MCF 10A (cell line): ENCODE measurements at regions of chr20 and their contacts with region 1.

Region 1: DNA sequence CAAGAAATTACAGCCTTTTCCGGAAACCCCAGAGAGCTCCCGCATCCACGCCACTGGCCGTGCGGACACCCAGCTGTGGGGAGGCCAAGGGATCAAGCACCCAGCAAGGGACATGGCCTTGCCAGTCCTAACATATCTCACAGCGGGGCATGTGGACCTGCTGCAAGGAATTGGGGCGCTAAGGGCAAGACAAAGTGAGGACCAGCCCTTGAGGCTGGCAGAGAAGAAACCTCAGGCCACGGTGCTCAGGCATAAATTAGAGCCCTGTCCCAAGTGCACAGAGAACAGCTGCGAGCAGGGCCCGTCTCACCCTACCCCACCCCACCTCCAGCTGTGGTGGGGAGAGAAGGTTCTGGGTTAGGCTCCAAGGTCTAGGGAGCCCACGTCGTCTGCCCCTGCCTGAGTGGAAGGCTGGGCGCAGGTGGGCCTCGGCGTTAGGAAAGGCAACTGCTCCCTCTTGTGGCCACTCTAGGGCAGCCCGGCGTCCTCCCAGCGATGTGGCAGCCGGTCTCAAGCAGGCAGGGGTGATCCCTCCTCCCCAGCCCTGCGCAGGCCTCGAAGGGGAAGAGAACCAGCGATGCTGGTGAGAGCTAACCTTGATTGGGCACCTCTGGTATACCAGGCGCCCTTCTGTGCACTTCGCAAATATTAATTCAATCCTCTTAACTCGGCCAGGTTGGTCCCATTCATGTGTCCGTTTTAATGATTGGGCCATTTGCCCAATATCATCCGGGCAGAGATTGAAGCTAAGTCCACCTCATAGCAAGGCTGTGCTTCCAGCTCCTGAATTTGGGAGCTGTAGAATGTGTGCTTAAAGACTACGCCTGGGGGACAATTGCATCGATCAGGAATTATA is 235.8 kb downstream of the NFATC2 start:
- DNase-seq: peak; percentile 73
- H3K4me3 Mint-ChIP-seq: no peak overlapping the region
- H3K27ac Mint-ChIP-seq: no peak overlapping the region
- H3K4me1 Mint-ChIP-seq: no peaks in the 10 kb centered on the region
- H3K27me3 Mint-ChIP-seq: no peaks in the 10 kb centered on the region
- CTCF ChIP-seq: peak; percentile 90

Region 2: GRCh38 chr20:50967586-50967985 is 339.1 kb before region 1 on chr20:
- CTCF ChIA-PET with region 1: interaction called, 19 read pairs
- POLR2A ChIA-PET with region 1: no interaction called
- intact Hi-C with region 1: no loop called
- DNase-seq: no peak
- H3K4me3 Mint-ChIP-seq: no peak overlapping the region
- H3K27ac Mint-ChIP-seq: no peak overlapping the region
- H3K4me1 Mint-ChIP-seq: no peaks in the 10 kb centered on the region
- H3K27me3 Mint-ChIP-seq: peaks cover 11% of the 10 kb centered on the region
- CTCF ChIP-seq: no peak

Region 3: DNA sequence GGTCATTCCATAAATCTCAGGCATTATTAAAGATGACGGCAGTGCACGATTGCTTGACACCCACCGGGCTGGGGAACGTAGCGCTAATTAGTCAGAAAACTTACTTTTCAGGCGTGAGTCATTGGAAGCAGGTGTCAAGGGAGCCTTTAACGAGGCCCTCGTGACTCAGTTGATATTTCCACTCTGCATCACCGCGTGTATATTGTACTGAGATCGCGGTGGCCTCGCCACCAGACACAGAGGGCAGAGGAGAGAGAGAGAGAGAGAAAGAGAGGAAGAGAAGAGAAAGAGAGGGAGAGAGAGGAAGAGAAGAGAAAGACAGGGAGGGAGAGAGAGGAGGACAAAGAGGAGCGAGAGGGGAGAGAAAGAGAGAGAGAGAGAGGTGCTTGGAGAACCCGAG is 305.0 kb before region 1 on chr20:
- CTCF ChIA-PET with region 1: interaction called, 810 read pairs
- POLR2A ChIA-PET with region 1: interaction called, 3 read pairs
- intact Hi-C with region 1: no loop called
- DNase-seq: no peak
- H3K4me3 Mint-ChIP-seq: no peak overlapping the region
- H3K27ac Mint-ChIP-seq: no peak overlapping the region
- H3K4me1 Mint-ChIP-seq: peaks cover 6% of the 10 kb centered on the region
- H3K27me3 Mint-ChIP-seq: no peaks in the 10 kb centered on the region
- CTCF ChIP-seq: no peak

Region 4: GRCh38 chr20:51029963-51030920 is 276.5 kb before region 1 on chr20:
- CTCF ChIA-PET with region 1: interaction called, 35 read pairs
- POLR2A ChIA-PET with region 1: no interaction called
- intact Hi-C with region 1: no loop called
- DNase-seq: no peak
- H3K4me3 Mint-ChIP-seq: no peak overlapping the region
- H3K27ac Mint-ChIP-seq: no peak overlapping the region
- H3K4me1 Mint-ChIP-seq: peaks cover 11% of the 10 kb centered on the region
- H3K27me3 Mint-ChIP-seq: peaks cover 26% of the 10 kb centered on the region
- CTCF ChIP-seq: no peak

Region 5: DNA sequence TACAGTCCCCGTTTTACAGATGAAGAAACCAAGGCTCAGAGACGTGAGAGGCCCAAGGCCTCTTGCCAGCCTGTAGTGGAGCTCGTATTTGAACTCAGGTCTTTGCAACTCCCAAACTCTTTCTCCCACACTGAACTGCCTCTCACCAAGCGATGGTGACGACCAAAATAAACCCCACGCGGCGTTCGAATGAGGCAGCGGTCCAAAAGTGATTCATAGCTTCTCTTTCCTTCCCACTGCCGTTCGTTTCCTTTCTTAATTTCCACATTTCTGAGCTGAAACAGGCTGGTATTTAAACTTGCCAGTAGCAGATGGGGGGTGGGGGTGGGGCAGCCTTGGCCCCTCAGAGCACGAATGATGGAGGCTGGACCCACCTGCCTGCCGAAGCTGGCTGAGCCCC is 30.9 kb before region 1 on chr20:
- CTCF ChIA-PET with region 1: interaction called, 13 read pairs
- POLR2A ChIA-PET with region 1: no interaction called
- intact Hi-C with region 1: no loop called
- DNase-seq: peak; percentile 5
- H3K4me3 Mint-ChIP-seq: no peak overlapping the region
- H3K27ac Mint-ChIP-seq: no peak overlapping the region
- H3K4me1 Mint-ChIP-seq: no peaks in the 10 kb centered on the region
- H3K27me3 Mint-ChIP-seq: peaks cover 11% of the 10 kb centered on the region
- CTCF ChIP-seq: no peak

Region 6: GRCh38 chr20:51331481-51331880 is 24.8 kb after region 1 on chr20:
- CTCF ChIA-PET with region 1: interaction called, 142 read pairs
- POLR2A ChIA-PET with region 1: interaction called, 4 read pairs
- intact Hi-C with region 1: no loop called
- DNase-seq: no peak
- H3K4me3 Mint-ChIP-seq: no peak overlapping the region
- H3K27ac Mint-ChIP-seq: no peak overlapping the region
- H3K4me1 Mint-ChIP-seq: peaks cover 14% of the 10 kb centered on the region
- H3K27me3 Mint-ChIP-seq: no peaks in the 10 kb centered on the region
- CTCF ChIP-seq: no peak